ENCODE measurements at regions of chr20 and their contacts with region 1.

Region 1: GRCh38 chr20:54219751-54220426 is 12.0 kb downstream of the PFDN4 start:
- DNase-seq: no peak
- ATAC-seq: no peak

Region 2: GRCh38 chr20:53594068-53595017 is 625.5 kb before region 1 on chr20:
- intact Hi-C with region 1: loop called (anchors 10 kb)
- DNase-seq: peak; percentile 99
- ATAC-seq: peak; percentile 94

Region 3: GRCh38 chr20:54475334-54476168 is 255.7 kb after region 1 on chr20 and contains the start of gene DOK5:
- intact Hi-C with region 1: loop called (anchors 10 kb)
- DNase-seq: peak; percentile 73
- ATAC-seq: peak; percentile 88
- total RNA-seq, gene DOK5: 3.0 TPM

Measured in Right ventricle myocardium inferior (tissue), 1 donor.